PC-9 (cell line): ENCODE measurements at regions of chr12 and their contacts with region 1.

Region 1: DNA sequence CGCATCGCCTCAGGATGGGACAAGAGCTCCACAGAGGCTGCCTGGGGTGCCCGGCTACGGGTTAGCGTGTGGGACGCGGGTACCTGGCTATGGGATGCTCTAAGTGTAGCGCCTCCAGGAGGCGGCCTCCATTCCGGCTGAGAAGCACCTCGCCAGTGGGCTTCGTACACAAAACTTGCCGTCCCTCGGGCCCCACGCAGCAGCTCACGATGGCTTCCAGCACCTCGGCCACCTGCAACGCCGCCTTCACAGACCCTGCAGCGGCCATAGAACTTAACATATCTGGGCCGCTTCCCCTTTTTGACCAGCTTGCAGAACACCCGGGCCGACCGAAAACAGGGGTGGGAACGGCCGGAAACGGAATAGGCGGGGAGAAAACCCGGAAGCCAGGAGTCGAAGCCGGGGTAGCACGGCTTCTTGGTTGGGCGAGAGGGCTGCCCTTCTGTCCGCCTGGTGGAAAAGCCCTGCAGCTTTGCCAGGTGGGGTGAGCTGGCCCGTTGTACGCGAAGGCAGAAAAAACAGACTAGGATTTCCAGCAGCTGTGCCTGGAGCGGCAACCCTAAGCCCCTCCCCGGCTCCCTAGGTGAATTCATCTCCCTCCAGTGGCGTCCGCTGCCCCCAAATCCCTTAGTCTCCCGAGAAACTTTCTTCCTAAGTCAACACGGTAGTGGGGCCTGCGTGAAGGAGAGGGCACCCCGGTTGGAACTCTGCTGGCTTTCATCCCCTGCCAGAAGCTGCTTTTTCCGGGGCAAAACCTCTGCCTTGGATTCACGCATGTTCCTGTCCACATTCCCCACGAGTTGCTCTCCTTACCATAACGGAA is at the start of gene BBS10:
- DNase-seq: peak; percentile 79 to 84
- H3K4me3 ChIP-seq: peak within 1 kb of the TSS; percentile 88
- H3K27ac ChIP-seq: peak within 1 kb of the TSS; percentile 60
- H3K4me1 ChIP-seq: peaks cover 14% of the 10 kb centered on the region
- H3K27me3 ChIP-seq: no peaks in the 10 kb centered on the region
- CTCF ChIP-seq: peak; percentile 47
- total RNA-seq, gene BBS10: 5.5 and 8.4 TPM in 2 replicates

Region 2: DNA sequence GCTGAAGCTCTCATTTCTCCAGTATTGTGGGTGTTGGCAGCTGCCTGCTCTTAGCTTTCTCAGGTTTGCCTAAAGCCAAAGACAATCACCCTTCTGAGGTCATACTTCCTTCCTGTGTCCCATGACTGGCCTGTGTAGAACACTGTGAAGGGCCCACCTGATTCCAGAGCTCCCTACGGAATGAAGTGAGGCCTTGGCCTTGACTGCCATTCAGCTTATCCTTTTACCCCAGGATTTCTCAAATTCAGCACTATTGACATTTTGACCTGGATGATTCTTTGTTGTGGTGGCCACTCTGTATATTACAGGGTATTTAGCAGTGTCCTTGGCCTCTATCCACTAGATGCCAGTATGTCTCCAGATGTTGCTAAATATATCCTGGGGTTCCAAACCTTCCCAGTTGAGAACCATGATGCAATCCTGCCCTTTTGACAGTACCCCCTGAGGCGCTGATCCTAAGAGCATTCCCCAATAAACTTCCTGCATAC is 724.6 kb before region 1 on chr12:
- CTCF ChIA-PET with region 1: no interaction called
- POLR2A ChIA-PET with region 1: no interaction called
- intact Hi-C with region 1: loop called (anchors 5 kb)
- DNase-seq: peak; percentile 33 to 69
- H3K4me3 ChIP-seq: no peak overlapping the region
- H3K27ac ChIP-seq: peak overlapping the region; percentile 62
- H3K4me1 ChIP-seq: peaks cover 16% of the 10 kb centered on the region
- H3K27me3 ChIP-seq: no peaks in the 10 kb centered on the region
- CTCF ChIP-seq: peak; percentile 54; the same call in 1 of the 2 replicates

Region 3: DNA sequence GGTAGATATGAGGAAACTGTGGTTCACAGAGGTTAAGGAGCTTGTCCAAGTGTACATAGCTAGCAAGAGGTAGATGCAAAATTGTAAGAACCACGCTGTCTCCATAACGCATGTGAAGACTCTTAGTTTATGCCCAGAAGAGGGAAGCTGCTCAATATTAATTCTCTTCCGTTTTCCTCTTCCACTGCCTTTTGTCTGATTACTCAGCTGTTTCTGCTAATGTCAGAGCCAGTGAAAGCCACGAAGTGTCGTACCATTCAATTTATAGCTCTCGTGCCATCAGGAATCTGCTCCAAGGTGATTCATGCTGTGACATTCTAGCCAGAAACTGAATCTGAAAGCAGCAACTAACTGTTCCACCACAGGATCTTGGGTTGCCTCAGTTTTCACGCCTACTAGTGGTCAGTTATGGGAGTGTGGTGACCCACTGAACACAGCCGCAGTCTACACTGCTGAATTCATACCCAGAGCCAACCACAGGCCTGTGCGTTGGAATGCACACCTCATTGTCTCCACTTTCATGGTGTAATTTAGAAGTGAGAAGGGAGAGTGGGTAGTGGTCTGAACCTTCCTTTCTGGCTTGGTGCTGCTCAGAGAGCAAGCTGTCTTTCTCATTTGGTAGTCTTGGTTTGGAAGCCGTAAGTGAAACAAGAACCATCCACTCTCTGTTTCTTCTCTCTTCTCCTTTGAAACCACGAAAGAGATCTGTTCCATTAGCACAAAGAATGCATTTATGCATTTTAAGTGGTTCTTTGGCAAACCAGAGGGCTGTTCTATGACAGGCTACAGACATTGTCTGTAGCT is 189.6 kb before region 1 on chr12:
- CTCF ChIA-PET with region 1: no interaction called
- POLR2A ChIA-PET with region 1: no interaction called
- intact Hi-C with region 1: loop called (anchors 1 kb)
- DNase-seq: peak in 1 of 2 experiments; percentile 53
- H3K4me3 ChIP-seq: no peak overlapping the region
- H3K27ac ChIP-seq: no peak overlapping the region
- H3K4me1 ChIP-seq: no peaks in the 10 kb centered on the region
- H3K27me3 ChIP-seq: no peaks in the 10 kb centered on the region
- CTCF ChIP-seq: peak; percentile 57

Region 4: DNA sequence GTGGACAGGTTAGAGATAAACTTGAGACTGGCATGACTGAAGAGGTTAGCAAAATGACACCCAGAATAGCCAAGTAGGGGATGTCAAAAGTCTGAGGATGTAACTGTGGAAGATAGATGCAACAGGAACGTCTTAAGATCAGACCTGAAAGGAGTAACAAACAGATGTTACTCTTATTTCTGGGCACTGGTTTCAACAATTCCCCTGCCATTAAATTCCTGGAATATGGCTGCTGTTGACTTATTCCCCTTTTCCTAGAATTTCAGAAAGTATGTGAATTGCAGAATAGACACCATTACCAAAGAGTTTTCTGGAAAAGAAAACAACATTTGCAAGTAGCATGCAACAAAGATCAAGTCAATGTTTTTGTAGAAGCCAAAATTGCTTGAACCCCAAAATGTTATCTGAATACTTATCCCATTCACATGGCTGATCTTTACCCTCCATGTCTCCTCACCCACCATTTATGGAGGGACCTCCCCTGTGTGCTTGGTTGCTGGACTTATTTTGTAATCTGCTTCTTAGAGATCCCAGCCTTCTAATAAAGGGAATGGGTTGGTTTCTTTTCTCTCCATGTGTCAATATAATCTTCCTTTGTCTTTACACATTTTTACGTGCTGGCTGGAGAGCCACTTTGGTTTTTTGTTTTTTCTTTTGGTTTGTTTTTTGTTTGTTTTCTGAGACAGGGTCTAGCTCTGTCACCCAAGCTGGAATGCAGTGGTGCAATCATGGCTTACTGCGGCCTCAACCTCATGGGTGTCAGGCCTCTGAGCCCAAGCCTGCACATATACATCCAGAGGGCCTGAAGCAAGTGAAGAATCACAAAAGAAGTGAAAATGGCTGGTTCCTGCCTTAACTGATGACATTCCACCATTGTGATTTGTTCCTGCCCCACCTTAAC is 57.1 kb before region 1 on chr12:
- CTCF ChIA-PET with region 1: no interaction called
- POLR2A ChIA-PET with region 1: no interaction called
- intact Hi-C with region 1: loop called (anchors 2 kb)
- DNase-seq: peak in 1 of 2 experiments; percentile 59
- H3K4me3 ChIP-seq: no peak overlapping the region
- H3K27ac ChIP-seq: peak overlapping the region; percentile 55; the same call in 1 of the 2 replicates
- H3K4me1 ChIP-seq: peaks cover 14% of the 10 kb centered on the region
- H3K27me3 ChIP-seq: no peaks in the 10 kb centered on the region
- CTCF ChIP-seq: no peak

Region 5: DNA sequence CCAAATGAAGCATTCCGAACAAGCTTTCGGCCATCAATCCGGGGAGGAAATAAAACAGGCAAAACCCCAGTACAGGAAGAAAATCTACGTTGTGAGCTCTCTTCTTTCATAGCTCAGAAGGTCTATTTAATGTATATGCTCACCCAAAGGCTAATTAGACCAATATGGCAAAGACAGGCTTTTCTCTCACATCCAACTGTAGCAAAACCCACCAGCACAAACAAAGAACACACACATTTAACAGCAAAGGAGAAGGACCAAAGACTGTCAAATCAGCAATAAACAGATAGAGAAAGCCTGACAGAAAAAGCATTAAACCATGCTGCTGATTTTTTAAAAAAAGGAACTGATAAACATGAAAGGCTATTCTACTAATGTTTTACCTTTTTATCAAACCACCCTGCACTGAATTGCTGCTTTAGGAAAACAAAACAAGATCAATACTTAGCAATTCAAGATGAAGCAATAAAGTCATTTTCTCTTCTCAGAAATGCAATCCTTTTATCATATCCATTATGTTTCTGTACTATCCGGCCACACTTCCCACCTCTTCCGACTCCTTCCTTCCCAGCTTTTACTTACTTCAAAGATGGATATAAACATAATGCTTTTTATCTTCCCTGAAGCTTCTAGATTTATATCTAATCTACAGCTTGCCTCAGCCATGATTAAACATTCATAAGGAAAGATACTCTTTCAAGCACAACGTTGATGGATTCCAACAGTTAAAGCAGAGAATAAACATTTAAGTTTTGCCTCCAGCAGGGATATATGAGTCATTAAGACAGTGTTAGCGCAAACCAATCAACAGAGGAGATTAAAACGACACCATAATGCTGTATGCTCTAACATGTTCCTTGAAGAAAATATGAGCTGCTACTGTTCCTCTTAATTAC is 74.5 kb after region 1 on chr12:
- CTCF ChIA-PET with region 1: no interaction called
- POLR2A ChIA-PET with region 1: no interaction called
- intact Hi-C with region 1: no loop called
- DNase-seq: no peak
- H3K4me3 ChIP-seq: no peak overlapping the region
- H3K27ac ChIP-seq: no peak overlapping the region
- H3K4me1 ChIP-seq: no peaks in the 10 kb centered on the region
- H3K27me3 ChIP-seq: no peaks in the 10 kb centered on the region
- CTCF ChIP-seq: no peak

Region 6: GRCh38 chr12:76586764-76587395 is 238.6 kb after region 1 on chr12:
- CTCF ChIA-PET with region 1: no interaction called
- POLR2A ChIA-PET with region 1: no interaction called
- intact Hi-C with region 1: loop called (anchors 10 kb)
- DNase-seq: peak in 1 of 2 experiments; percentile 10
- H3K4me3 ChIP-seq: no peak overlapping the region
- H3K27ac ChIP-seq: no peak overlapping the region
- H3K4me1 ChIP-seq: no peaks in the 10 kb centered on the region
- H3K27me3 ChIP-seq: no peaks in the 10 kb centered on the region
- CTCF ChIP-seq: peak; percentile 82